T-cell (primary cell): ENCODE measurements at regions of chr9 and their contacts with region 1.

Region 1: GRCh38 chr9:34675048-34675714 is 12.7 kb upstream of the CCL27 start:
- DNase-seq: peak in 27 of 35 experiments; percentile 15 to 64 (median 30)
- ATAC-seq: peak; percentile 63 to 82 (median 76)
- H3K4me3 ChIP-seq: no peak overlapping the region
- H3K4me3 Mint-ChIP-seq: no peak overlapping the region
- H3K27ac ChIP-seq: no peak overlapping the region
- H3K27ac Mint-ChIP-seq: no peak overlapping the region
- H3K4me1 ChIP-seq: no peaks in the 10 kb centered on the region
- H3K4me1 Mint-ChIP-seq: peaks cover 0 to 13% (median 2%) of the 10 kb centered on the region in 3 donors
- H3K27me3 ChIP-seq: peaks cover 0 to 2% of the 10 kb centered on the region in 2 experiments
- H3K27me3 Mint-ChIP-seq: no peaks in the 10 kb centered on the region

Region 2: GRCh38 chr9:34458013-34458958 is 216.9 kb before region 1 on chr9 and contains the starts of genes DNAI1 and FAM219A:
- CTCF ChIA-PET with region 1: interaction called in 1 of 2 experiments, 10 read pairs
- POLR2A ChIA-PET with region 1: no interaction called
- DNase-seq: peak; percentile 96 to 100 (median 98)
- ATAC-seq: peak; percentile 95 to 98 (median 96)
- H3K4me3 ChIP-seq: peak within 1 kb of the TSS; percentile 63 to 79
- H3K4me3 Mint-ChIP-seq: peak within 1 kb of the TSS; percentile 88 to 90 (median 88)
- H3K27ac ChIP-seq: no peak within 1 kb of the TSS
- H3K27ac Mint-ChIP-seq: peak within 1 kb of the TSS; percentile 42 to 45
- H3K4me1 ChIP-seq: peaks cover 10 to 19% of the 10 kb centered on the region in 2 experiments
- H3K4me1 Mint-ChIP-seq: peaks cover 33 to 49% (median 34%) of the 10 kb centered on the region in 3 donors
- H3K27me3 ChIP-seq: peaks cover 0 to 8% of the 10 kb centered on the region in 2 experiments
- H3K27me3 Mint-ChIP-seq: peaks cover 5 to 6% of the 10 kb centered on the region in 2 donors
- total RNA-seq, gene DNAI1: not detected
- total RNA-seq, gene FAM219A: 10.7 to 20.7 (median 18.7) TPM